Activated CD4-positive, alpha-beta T cell treated with anti-CD3 and anti-CD28 coated beads for 36 hours (primary cell): ENCODE measurements at regions of chr16 and their contacts with region 1.

Region 1: GRCh38 chr16:27367461-27368357 is 34.3 kb upstream of the IL21R start:
- DNase-seq: peak; percentile 95
- ATAC-seq: peak; percentile 74
- H3K4me3 Mint-ChIP-seq: peak overlapping the region; percentile 58
- H3K27ac Mint-ChIP-seq: peak overlapping the region; percentile 98
- H3K4me1 Mint-ChIP-seq: peaks cover 79% of the 10 kb centered on the region
- H3K27me3 Mint-ChIP-seq: no peaks in the 10 kb centered on the region

Region 2: DNA sequence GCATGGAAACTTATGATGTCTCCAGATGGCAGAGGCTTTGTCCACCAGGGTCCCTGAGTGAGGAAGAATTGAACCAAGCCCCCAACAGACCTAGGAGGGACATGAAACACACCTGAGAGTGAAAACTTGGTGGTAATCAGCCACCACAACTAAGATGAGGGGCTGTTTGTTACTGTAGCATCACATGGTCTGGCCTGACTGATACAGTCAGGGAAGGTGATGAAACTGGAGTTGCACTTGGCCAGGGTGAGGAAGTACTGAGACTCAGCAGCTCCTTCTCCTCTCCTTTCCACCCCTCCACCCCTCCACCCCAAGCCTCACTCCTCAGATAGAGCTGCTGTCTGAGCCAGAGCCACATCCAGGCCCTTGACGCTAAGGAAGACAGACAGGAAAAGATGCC is 263.8 kb before region 1 on chr16:
- CTCF ChIA-PET with region 1: no interaction called
- POLR2A ChIA-PET with region 1: no interaction called
- intact Hi-C with region 1: no loop called
- DNase-seq: no peak
- ATAC-seq: no peak
- H3K4me3 Mint-ChIP-seq: no peak overlapping the region
- H3K27ac Mint-ChIP-seq: no peak overlapping the region
- H3K4me1 Mint-ChIP-seq: no peaks in the 10 kb centered on the region
- H3K27me3 Mint-ChIP-seq: peaks cover 3% of the 10 kb centered on the region

Region 3: DNA sequence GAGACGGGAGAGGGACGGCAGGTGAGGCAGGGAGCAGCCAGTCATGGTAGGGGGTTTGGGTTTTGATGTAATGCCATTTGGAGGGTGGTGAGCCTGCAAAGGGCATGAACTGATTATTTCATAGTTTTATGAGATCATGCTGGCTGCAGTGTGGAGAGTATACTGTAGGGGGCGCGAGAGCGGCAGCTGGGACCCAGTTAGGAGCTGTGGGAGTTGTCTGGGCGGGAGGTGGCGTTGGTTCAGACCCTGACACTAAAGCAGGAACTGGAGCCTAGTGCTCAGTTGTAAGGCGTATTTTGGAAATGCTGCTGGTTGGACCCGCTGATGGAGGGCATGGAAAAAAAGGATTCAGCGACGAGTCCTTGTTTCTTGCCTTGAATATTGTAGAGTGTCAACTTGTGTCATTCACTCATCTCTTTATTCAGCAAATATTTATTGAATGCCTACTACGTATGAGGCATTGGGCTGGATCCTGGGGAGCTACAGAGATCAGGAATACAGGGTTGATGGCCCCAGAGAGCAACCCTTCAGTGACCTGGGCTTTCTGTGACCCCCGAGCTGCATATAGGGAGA is 188.1 kb before region 1 on chr16:
- CTCF ChIA-PET with region 1: interaction called, 8 read pairs
- POLR2A ChIA-PET with region 1: interaction called, 8 read pairs
- intact Hi-C with region 1: loop called (anchors 1 to 2 kb)
- DNase-seq: peak; percentile 95
- ATAC-seq: peak; percentile 91
- H3K4me3 Mint-ChIP-seq: no peak overlapping the region
- H3K27ac Mint-ChIP-seq: peak overlapping the region; percentile 80
- H3K4me1 Mint-ChIP-seq: peaks cover 48% of the 10 kb centered on the region
- H3K27me3 Mint-ChIP-seq: no peaks in the 10 kb centered on the region

Region 4: GRCh38 chr16:27268376-27269299 is 99.1 kb before region 1 on chr16 and contains the start of gene NSMCE1:
- CTCF ChIA-PET with region 1: interaction called, 13 read pairs
- POLR2A ChIA-PET with region 1: interaction called, 5 read pairs
- intact Hi-C with region 1: loop called (anchors 1 to 5 kb)
- DNase-seq: peak; percentile 99
- ATAC-seq: peak; percentile 94
- H3K4me3 Mint-ChIP-seq: peak within 1 kb of the TSS; percentile 90
- H3K27ac Mint-ChIP-seq: peak within 1 kb of the TSS; percentile 95
- H3K4me1 Mint-ChIP-seq: peaks cover 72% of the 10 kb centered on the region
- H3K27me3 Mint-ChIP-seq: no peaks in the 10 kb centered on the region
- total RNA-seq, gene NSMCE1: 110 to 127 TPM

Region 5: GRCh38 chr16:27318392-27319226 is 49.1 kb before region 1 on chr16:
- CTCF ChIA-PET with region 1: interaction called, 14 read pairs
- POLR2A ChIA-PET with region 1: interaction called, 66 read pairs
- intact Hi-C with region 1: loop called (anchors 1 kb)
- DNase-seq: peak; percentile 80
- ATAC-seq: peak; percentile 78
- H3K4me3 Mint-ChIP-seq: peak overlapping the region; percentile 90
- H3K27ac Mint-ChIP-seq: peak overlapping the region; percentile 97
- H3K4me1 Mint-ChIP-seq: peaks cover 79% of the 10 kb centered on the region
- H3K27me3 Mint-ChIP-seq: no peaks in the 10 kb centered on the region

Region 6: GRCh38 chr16:27408012-27408601 is 40.4 kb after region 1 on chr16:
- CTCF ChIA-PET with region 1: interaction called, 47 read pairs
- POLR2A ChIA-PET with region 1: interaction called, 103 read pairs
- intact Hi-C with region 1: loop called (anchors 1 to 2 kb)
- DNase-seq: peak; percentile 71
- ATAC-seq: peak; percentile 59
- H3K4me3 Mint-ChIP-seq: peak overlapping the region; percentile 99
- H3K27ac Mint-ChIP-seq: peak overlapping the region; percentile 97
- H3K4me1 Mint-ChIP-seq: peaks cover 73% of the 10 kb centered on the region
- H3K27me3 Mint-ChIP-seq: no peaks in the 10 kb centered on the region

Region 7: GRCh38 chr16:28140788-28141618 is 773.3 kb after region 1 on chr16:
- CTCF ChIA-PET with region 1: no interaction called
- POLR2A ChIA-PET with region 1: no interaction called
- intact Hi-C with region 1: loop called in 1 of 2 experiments (anchors 2 kb)
- DNase-seq: peak; percentile 85
- ATAC-seq: peak; percentile 82
- H3K4me3 Mint-ChIP-seq: peak overlapping the region; percentile 60
- H3K27ac Mint-ChIP-seq: peak overlapping the region; percentile 99
- H3K4me1 Mint-ChIP-seq: peaks cover 85% of the 10 kb centered on the region
- H3K27me3 Mint-ChIP-seq: no peaks in the 10 kb centered on the region